ENCODE measurements at regions of chr18 and their contacts with region 1.

Region 1: DNA sequence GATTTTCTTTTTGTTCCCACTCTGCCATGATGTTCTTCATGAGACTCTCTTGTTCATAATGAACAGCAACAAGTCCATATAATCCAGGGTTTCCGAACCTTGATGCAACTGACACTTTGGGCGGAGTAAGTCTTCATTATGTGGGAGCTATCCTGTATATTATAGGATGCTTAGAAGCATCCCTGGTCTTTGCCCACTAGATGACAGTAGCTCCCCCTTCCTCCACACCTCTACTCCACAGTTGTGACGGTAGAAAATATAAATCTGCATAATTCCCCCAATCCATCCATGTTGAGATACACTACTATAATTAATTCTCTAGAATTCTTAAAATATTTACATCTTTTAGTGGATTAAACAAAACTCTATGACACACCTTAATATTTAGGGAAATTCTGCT is 482.2 kb upstream of the CELF4 start:
- DNase-seq: no peak
- ATAC-seq: no peak
- H3K4me3 ChIP-seq: no peak overlapping the region
- H3K27ac ChIP-seq: no peak overlapping the region
- H3K4me1 ChIP-seq: no peaks in the 10 kb centered on the region
- H3K27me3 ChIP-seq: peaks cover 0 to under 1% (median 0%) of the 10 kb centered on the region in 7 donors
- CTCF ChIP-seq: peak in 1 of 9 donors; percentile 17

Region 2: GRCh38 chr18:38115201-38115600 is 67.4 kb after region 1 on chr18:
- intact Hi-C with region 1: loop called in 1 of 10 experiments (anchors 10 kb)
- DNase-seq: no peak
- ATAC-seq: no peak
- H3K4me3 ChIP-seq: no peak overlapping the region
- H3K27ac ChIP-seq: no peak overlapping the region
- H3K4me1 ChIP-seq: no peaks in the 10 kb centered on the region
- H3K27me3 ChIP-seq: no peaks in the 10 kb centered on the region
- CTCF ChIP-seq: no peak

Region 3: DNA sequence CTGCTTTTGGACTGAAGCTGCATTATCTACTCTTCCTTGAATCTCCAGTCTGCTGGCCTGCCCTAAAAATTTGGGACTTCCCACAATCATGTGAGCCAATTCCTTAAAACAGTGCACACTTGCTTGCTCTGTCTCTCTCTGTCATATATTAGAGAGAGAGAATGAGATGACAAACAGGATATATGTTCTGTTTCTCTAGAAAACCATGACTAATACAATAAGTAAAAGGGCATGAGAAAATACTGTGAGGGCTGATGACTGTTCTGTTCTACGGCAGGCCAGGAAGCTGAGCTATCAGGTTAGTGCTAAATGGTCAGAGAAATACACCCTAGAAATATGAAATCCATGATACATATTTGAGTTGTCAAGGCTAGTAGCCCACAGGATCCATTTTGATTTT is 1414.6 kb after region 1 on chr18:
- intact Hi-C with region 1: loop called in 1 of 10 experiments (anchors 10 kb)
- DNase-seq: no peak
- ATAC-seq: no peak
- H3K4me3 ChIP-seq: no peak overlapping the region
- H3K27ac ChIP-seq: no peak overlapping the region
- H3K4me1 ChIP-seq: no peaks in the 10 kb centered on the region
- H3K27me3 ChIP-seq: no peaks in the 10 kb centered on the region
- CTCF ChIP-seq: no peak

Measured in heart right ventricle (tissue), 16 donors.